ENCODE measurements at regions of chr10 and their contacts with region 1.

Region 1: DNA sequence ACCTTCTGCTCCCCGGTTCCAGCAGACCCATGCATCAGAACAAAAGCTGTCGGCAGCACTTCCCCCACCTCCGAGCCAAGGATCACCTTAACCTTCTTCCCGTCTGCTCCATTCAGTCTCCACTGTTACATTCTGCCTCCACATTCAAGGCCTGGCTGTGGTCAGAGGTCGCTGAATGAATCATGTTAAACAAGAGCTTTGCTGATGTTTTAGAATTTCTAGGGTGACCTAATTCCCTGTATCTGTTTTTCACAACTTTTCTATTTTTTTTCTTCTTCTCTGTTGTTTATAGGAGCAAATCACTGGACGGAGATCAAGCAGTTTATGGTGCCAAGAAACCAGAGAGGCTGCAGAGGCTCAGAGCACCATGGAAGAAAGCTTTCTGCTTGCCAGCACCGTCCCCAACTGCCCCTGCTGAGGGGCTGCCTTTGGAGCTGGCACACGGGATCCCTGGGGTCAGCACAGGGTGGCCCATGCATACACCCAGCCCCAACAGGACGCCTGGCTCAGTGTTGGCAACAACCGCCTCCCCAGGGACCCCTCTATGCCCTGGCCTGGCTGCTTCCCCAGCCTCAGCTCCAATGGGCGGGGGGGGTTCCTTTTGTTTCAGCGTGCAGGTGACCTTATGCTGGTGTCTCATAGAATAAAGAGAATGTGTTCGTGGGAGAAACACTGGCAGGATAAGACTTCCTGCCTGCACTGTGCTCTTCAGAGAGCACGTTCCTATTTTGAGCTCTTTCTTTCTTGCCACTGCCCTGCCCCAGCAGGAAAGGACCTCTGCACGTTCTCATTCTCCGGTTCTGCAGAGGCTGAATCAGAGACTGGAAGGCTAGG is 182.7 kb upstream of the LYZL2 start:
- DNase-seq: peak in 1 of 2 donors; percentile 60
- ATAC-seq: peak; percentile 83
- H3K4me3 ChIP-seq: no peak overlapping the region
- H3K27ac ChIP-seq: peak overlapping the region; percentile 30 to 85
- H3K4me1 ChIP-seq: peaks cover 6% of the 10 kb centered on the region in 2 donors
- H3K27me3 ChIP-seq: no peaks in the 10 kb centered on the region

Region 2: DNA sequence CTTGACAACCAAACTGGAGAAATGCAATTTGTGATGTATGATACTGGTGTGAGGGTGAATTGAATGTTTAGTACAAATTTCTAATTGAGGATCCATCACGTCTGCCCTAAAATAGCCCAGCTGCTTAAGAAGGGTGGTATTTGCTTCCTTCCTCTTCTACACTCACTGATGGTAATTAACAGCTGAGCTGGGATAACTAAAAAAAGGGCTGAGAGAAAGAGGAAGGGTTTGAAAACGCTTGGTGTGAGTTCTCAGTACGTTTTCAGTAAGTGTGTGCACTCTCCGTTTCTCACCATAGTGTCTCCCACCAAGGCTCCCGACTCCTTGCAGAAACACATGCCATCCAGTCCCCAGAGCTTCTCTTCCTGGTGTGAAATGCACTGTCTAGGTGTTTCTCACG is 323.9 kb before region 1 on chr10:
- intact Hi-C with region 1: no loop called
- DNase-seq: no peak
- ATAC-seq: no peak
- H3K4me3 ChIP-seq: no peak overlapping the region
- H3K27ac ChIP-seq: no peak overlapping the region
- H3K4me1 ChIP-seq: no peaks in the 10 kb centered on the region
- H3K27me3 ChIP-seq: no peaks in the 10 kb centered on the region

Region 3: GRCh38 chr10:30788307-30788706 is 23.9 kb before region 1 on chr10:
- intact Hi-C with region 1: no loop called
- DNase-seq: no peak
- ATAC-seq: no peak
- H3K4me3 ChIP-seq: no peak overlapping the region
- H3K27ac ChIP-seq: no peak overlapping the region
- H3K4me1 ChIP-seq: no peaks in the 10 kb centered on the region
- H3K27me3 ChIP-seq: no peaks in the 10 kb centered on the region

Region 4: GRCh38 chr10:30873411-30873810 is 61.2 kb after region 1 on chr10:
- intact Hi-C with region 1: no loop called
- DNase-seq: no peak
- ATAC-seq: no peak
- H3K4me3 ChIP-seq: no peak overlapping the region
- H3K27ac ChIP-seq: no peak overlapping the region
- H3K4me1 ChIP-seq: peaks cover 0 to 5% of the 10 kb centered on the region in 2 donors
- H3K27me3 ChIP-seq: no peaks in the 10 kb centered on the region

Region 5: GRCh38 chr10:30970760-30971460 is 158.7 kb after region 1 on chr10:
- intact Hi-C with region 1: loop called in 1 of 2 experiments (anchors 10 kb)
- DNase-seq: no peak
- ATAC-seq: no peak
- H3K4me3 ChIP-seq: no peak overlapping the region
- H3K27ac ChIP-seq: no peak overlapping the region
- H3K4me1 ChIP-seq: peaks cover 6 to 14% of the 10 kb centered on the region in 2 donors
- H3K27me3 ChIP-seq: no peaks in the 10 kb centered on the region